ENCODE measurements at regions of chr2 and their contacts with region 1.

Region 1: GRCh38 chr2:200578778-200579177 is 7.0 kb upstream of the AOX1 start:
- DNase-seq: peak; percentile 25
- H3K4me3 ChIP-seq: no peak overlapping the region
- H3K27ac ChIP-seq: no peak overlapping the region
- H3K4me1 ChIP-seq: no peaks in the 10 kb centered on the region
- H3K27me3 ChIP-seq: no peaks in the 10 kb centered on the region
- CTCF ChIP-seq: peak; percentile 56 to 75

Region 2: DNA sequence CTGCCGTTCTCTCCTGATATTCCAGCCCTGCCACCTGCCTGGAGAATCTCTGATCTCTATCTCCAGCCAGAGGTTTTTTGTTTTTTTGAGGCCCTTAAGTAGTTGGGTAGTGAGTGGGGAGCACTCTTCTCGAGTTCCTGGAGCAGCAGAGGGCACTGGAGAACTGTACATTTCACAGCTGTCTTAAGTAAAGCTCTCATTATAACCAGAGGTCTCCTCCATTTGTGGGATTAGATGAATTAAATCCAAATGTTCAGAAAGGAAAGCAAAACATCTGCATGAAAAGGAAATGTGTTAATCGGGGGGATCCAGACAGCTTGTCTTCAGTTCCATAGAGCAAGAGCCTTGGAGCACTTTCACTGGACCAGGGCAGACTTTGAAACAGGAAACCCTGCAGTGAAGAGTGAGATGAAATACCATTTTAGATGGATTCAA is 39.8 kb after region 1 on chr2:
- CTCF ChIA-PET with region 1: interaction called, 13 read pairs
- dilution Hi-C with region 1: no loop called
- in situ Hi-C with region 1: no loop called
- intact Hi-C with region 1: no loop called
- DNase-seq: no peak
- H3K4me3 ChIP-seq: no peak overlapping the region
- H3K27ac ChIP-seq: no peak overlapping the region
- H3K4me1 ChIP-seq: peaks cover 22% of the 10 kb centered on the region
- H3K27me3 ChIP-seq: no peaks in the 10 kb centered on the region
- CTCF ChIP-seq: peak in 1 of 2 donors; percentile 30

Region 3: GRCh38 chr2:200670313-200670712 is 91.5 kb after region 1 on chr2:
- CTCF ChIA-PET with region 1: no interaction called
- dilution Hi-C with region 1: no loop called
- in situ Hi-C with region 1: no loop called
- intact Hi-C with region 1: loop called (anchors 1 kb)
- DNase-seq: no peak
- H3K4me3 ChIP-seq: no peak overlapping the region
- H3K27ac ChIP-seq: no peak overlapping the region
- H3K4me1 ChIP-seq: no peaks in the 10 kb centered on the region
- H3K27me3 ChIP-seq: no peaks in the 10 kb centered on the region
- CTCF ChIP-seq: peak in 1 of 2 donors; percentile 24

Region 4: GRCh38 chr2:200811336-200812121 is 232.8 kb after region 1 on chr2 and contains the start of gene BZW1:
- CTCF ChIA-PET with region 1: no interaction called
- dilution Hi-C with region 1: no loop called
- in situ Hi-C with region 1: no loop called
- intact Hi-C with region 1: loop called (anchors 10 kb)
- DNase-seq: peak; percentile 95
- H3K4me3 ChIP-seq: peak within 1 kb of the TSS; percentile 46 to 96 (median 86)
- H3K27ac ChIP-seq: peak within 1 kb of the TSS; percentile 94
- H3K4me1 ChIP-seq: peaks cover 25% of the 10 kb centered on the region
- H3K27me3 ChIP-seq: no peaks in the 10 kb centered on the region
- CTCF ChIP-seq: no peak
- total RNA-seq, gene BZW1: 350 to 501 TPM